Panc1 (cell line): ENCODE measurements at regions of chr17 and their contacts with region 1.

Region 1: GRCh38 chr17:1110862-1111598 is 68.8 kb downstream of the ABR start:
- DNase-seq: peak; percentile 70
- ATAC-seq: peak; percentile 60
- H3K4me3 ChIP-seq: peak overlapping the region in 1 of 2 experiments; percentile 8; a peak in 1 of 4 replicates
- H3K27ac ChIP-seq: peak overlapping the region; percentile 96
- H3K4me1 ChIP-seq: peaks cover 59% of the 10 kb centered on the region
- H3K27me3 ChIP-seq: no peaks in the 10 kb centered on the region
- CTCF ChIP-seq: no peak

Region 2: GRCh38 chr17:1122533-1123392 is 11.7 kb after region 1 on chr17:
- CTCF ChIA-PET with region 1: interaction called, 6 read pairs
- POLR2A ChIA-PET with region 1: interaction called, 15 read pairs
- in situ Hi-C with region 1: no loop called
- intact Hi-C with region 1: no loop called
- DNase-seq: no peak
- ATAC-seq: peak; percentile 85
- H3K4me3 ChIP-seq: no peak overlapping the region
- H3K27ac ChIP-seq: peak overlapping the region; percentile 39
- H3K4me1 ChIP-seq: peaks cover 14% of the 10 kb centered on the region
- H3K27me3 ChIP-seq: no peaks in the 10 kb centered on the region
- CTCF ChIP-seq: peak; percentile 95

Region 3: DNA sequence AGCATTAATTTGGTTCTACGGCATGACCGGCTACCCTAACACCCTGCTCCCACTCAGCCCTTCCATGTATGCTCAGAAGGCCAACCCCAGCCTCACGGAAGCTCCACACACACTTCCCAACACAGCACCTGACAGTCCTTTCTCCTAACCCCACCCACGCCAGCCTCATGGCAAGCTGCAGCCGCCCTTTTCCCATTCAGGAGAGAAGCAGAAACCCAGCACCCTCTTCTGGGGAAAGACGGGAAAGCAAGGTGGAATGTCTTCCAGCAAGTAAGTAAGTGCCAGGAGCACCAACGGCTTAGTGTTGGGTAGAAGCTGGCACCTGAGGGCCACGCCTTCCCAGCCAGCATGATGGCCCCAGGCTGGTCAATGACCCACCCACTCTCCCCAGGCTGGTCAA is 36.6 kb after region 1 on chr17:
- CTCF ChIA-PET with region 1: interaction called, 13 read pairs
- POLR2A ChIA-PET with region 1: no interaction called
- in situ Hi-C with region 1: no loop called
- intact Hi-C with region 1: no loop called
- DNase-seq: peak; percentile 39
- ATAC-seq: peak; percentile 84
- H3K4me3 ChIP-seq: no peak overlapping the region
- H3K27ac ChIP-seq: no peak overlapping the region
- H3K4me1 ChIP-seq: no peaks in the 10 kb centered on the region
- H3K27me3 ChIP-seq: no peaks in the 10 kb centered on the region
- CTCF ChIP-seq: no peak; the same call in 1 of the 2 replicates

Region 4: DNA sequence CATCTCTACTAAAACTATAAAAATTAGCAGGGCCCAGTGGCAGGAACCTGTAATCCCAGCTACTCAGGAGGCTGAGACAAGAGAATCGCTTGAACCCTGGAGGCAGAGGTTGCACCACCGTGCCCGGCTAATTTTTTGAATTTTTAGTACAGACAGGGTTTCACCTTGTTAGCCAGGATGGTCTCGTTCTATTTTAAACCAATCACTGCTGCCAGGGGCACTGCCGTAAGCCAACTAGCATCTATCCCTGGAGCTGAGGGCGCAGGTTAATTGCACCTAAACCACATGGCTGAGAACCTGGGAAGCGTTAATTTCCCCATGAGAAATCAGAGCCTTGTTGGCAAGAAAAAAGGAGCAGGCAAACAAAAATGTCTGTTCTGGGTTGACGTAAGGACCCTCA is 132.3 kb after region 1 on chr17:
- CTCF ChIA-PET with region 1: interaction called, 14 read pairs
- POLR2A ChIA-PET with region 1: no interaction called
- in situ Hi-C with region 1: no loop called
- intact Hi-C with region 1: no loop called
- DNase-seq: no peak
- ATAC-seq: no peak
- H3K4me3 ChIP-seq: no peak overlapping the region
- H3K27ac ChIP-seq: no peak overlapping the region
- H3K4me1 ChIP-seq: no peaks in the 10 kb centered on the region
- H3K27me3 ChIP-seq: no peaks in the 10 kb centered on the region
- CTCF ChIP-seq: no peak